Activated naive CD4-positive, alpha-beta T cell treated with anti-CD3 and anti-CD28 coated beads for 36 hours (primary cell): ENCODE measurements at regions of chr6 and their contacts with region 1.

Region 1: GRCh38 chr6:30102970-30103874 is 9.7 kb downstream of the TRIM31 start:
- DNase-seq: peak; percentile 93
- H3K4me3 Mint-ChIP-seq: peak overlapping the region; percentile 78
- H3K27ac Mint-ChIP-seq: no peak overlapping the region
- H3K4me1 Mint-ChIP-seq: peaks cover 45% of the 10 kb centered on the region
- H3K27me3 Mint-ChIP-seq: peaks cover 26% of the 10 kb centered on the region

Region 2: DNA sequence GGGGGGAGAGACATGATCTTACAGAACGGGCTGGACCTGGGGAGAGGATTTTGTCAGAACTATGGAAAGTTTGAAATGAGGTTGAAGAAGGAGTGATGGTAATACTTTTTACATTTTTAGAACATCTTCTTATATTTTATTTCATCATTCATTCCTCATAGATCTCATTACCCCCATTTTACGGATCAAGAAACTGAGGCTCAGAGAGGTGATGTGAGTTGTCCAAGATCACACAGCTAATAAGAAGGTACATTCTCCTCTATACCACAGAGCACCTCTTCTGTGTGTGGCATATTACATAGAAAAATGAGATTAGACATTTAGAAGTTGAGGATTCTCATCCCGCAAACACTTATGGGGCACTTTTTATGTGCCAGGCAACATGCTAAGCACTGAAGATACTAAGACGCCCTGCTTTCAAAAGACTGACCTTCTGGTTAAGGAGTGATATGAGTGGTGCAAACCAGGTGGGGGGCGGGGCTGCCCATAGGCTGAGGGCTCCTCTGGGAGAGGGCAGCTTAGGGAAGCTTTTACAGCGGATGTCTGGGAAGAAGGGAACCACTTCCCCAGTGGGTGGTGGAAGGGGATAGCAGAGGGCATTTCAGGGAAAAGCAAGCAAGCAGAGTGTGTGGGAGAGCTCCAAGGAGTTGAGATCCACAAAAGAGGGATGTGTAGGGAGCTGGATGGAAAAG is 10.2 kb before region 1 on chr6:
- CTCF ChIA-PET with region 1: interaction called, 10 read pairs
- intact Hi-C with region 1: no loop called
- DNase-seq: no peak
- H3K4me3 Mint-ChIP-seq: no peak overlapping the region
- H3K27ac Mint-ChIP-seq: no peak overlapping the region
- H3K4me1 Mint-ChIP-seq: peaks cover 9% of the 10 kb centered on the region
- H3K27me3 Mint-ChIP-seq: peaks cover 9% of the 10 kb centered on the region

Region 3: DNA sequence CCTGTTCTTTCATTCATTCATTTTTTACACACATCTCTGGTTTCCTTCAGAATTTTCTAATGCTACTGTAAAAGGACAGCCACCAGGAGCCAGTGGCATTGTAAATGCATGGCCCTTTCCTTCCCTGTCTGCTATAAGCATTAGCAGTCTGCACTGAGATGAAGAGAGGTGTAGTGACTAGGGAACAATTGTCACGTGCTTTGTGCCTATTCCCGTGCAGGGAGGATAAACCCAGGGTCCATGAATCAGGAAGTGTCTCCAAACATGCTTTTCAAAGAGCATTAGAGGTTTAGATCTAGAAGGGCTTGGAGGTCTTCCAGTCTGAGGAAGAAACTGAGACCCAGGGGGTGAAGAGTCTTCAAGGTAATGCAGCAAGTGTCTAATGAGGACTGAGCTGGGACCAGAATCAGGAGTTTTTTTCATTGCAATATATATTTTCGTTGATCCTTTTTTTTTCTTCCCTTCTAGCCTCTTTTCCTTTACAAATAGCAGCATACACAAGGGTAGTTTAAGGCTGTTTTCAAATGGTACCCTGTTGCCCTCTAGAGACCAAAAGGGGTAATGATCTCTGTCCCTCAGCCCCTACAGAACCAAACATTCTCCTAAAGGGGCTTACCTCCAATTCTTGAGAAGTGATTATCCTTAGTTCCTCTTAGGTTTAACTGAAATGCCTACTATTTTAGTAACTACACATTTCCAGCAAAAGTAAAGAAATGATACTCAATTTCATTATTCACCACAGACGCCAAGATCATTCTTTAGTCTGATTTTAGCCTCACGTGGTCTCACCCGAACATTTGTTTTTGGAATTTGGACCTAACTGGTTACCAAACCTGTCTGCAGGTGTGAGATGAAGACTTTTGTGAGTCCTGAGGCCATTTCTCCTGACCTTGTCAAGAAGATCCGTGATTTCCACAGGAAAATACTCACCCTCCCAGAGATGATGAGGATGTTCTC is 66.7 kb after region 1 on chr6:
- CTCF ChIA-PET with region 1: interaction called, 19 read pairs
- intact Hi-C with region 1: loop called (anchors 1 kb)
- DNase-seq: peak; percentile 26
- H3K4me3 Mint-ChIP-seq: no peak overlapping the region
- H3K27ac Mint-ChIP-seq: no peak overlapping the region
- H3K4me1 Mint-ChIP-seq: peaks cover 21% of the 10 kb centered on the region
- H3K27me3 Mint-ChIP-seq: peaks cover 43% of the 10 kb centered on the region

Region 4: DNA sequence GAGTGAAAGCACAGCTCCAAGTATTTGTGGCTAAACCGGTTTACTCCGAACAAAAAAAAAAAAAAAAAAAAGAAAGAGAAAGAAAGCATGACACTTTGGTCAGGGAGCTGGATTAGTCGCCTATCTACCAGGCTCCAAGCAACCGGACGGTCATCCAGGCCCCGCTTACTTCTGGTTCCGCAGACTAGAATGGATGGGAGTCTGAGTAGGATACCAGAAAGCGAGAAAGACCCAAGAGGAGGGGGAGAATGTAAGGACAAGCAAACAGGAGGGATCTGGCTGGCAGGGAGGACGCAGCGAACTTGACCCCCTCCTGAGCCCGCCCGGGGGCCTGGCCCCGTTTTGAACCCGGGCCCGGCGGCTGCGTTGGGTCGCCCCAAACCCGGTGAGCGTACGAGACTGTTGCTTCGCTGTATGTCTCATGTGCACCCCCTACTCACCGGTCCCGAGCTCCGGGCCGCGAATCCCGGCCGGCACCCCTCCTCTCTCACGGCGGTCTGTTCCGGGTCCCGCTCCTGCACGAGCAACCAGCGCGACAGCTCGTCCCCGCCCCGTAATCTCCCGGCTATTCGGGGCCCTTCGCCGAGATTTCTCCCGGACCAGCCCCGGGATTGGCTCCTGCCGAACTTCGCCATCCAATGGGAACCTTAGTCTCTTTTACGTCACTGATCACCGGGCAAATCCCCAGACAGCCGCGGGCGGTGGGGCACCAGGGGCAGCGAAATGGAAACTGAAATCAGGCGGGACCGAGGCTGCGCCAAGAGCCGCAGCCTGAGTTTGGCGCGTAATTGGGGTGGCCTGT is 109.8 kb after region 1 on chr6 and contains the start of gene TRIM26:
- CTCF ChIA-PET with region 1: no interaction called
- intact Hi-C with region 1: loop called (anchors 1 kb)
- DNase-seq: peak; percentile 99
- H3K4me3 Mint-ChIP-seq: peak within 1 kb of the TSS; percentile 94
- H3K27ac Mint-ChIP-seq: peak within 1 kb of the TSS; percentile 99
- H3K4me1 Mint-ChIP-seq: peaks cover 41% of the 10 kb centered on the region
- H3K27me3 Mint-ChIP-seq: no peaks in the 10 kb centered on the region
- total RNA-seq, gene TRIM26: 36.8 to 38.7 TPM